CD14-positive monocyte (primary cell): ENCODE measurements at regions of chr7 and their contacts with region 1.

Region 1: GRCh38 chr7:65373608-65374351 is at the start of gene ZNF92:
- DNase-seq: peak; percentile 90 to 96 (median 91)
- H3K4me3 ChIP-seq: peak within 1 kb of the TSS; percentile 75 to 95 (median 77)
- H3K4me3 Mint-ChIP-seq: peak within 1 kb of the TSS; percentile 97 to 98
- H3K27ac ChIP-seq: peak within 1 kb of the TSS; percentile 96 to 97
- H3K27ac Mint-ChIP-seq: peak within 1 kb of the TSS; percentile 94 to 98 (median 97)
- H3K4me1 ChIP-seq: peaks cover 15 to 20% of the 10 kb centered on the region in 2 donors
- H3K4me1 Mint-ChIP-seq: peaks cover 26% of the 10 kb centered on the region
- H3K27me3 ChIP-seq: no peaks in the 10 kb centered on the region
- H3K27me3 Mint-ChIP-seq: peaks cover 0 to 2% (median 2%) of the 10 kb centered on the region in 3 donors
- CTCF ChIP-seq: no peak
- polyA plus RNA-seq, gene ZNF92: 2.3 to 6.4 (median 4.1) TPM

Region 2: GRCh38 chr7:63925623-63926460 is 1447.9 kb before region 1 on chr7:
- intact Hi-C with region 1: loop called in 1 of 2 experiments (anchors 10 kb)
- DNase-seq: peak; percentile 78 to 88 (median 88)
- H3K4me3 ChIP-seq: peak overlapping the region; percentile 53 to 82 (median 82)
- H3K4me3 Mint-ChIP-seq: peak overlapping the region; percentile 92 to 93
- H3K27ac ChIP-seq: peak overlapping the region; percentile 65 to 84
- H3K27ac Mint-ChIP-seq: peak overlapping the region; percentile 84 to 97 (median 91)
- H3K4me1 ChIP-seq: peaks cover 13 to 21% of the 10 kb centered on the region in 2 donors
- H3K4me1 Mint-ChIP-seq: peaks cover 20% of the 10 kb centered on the region
- H3K27me3 ChIP-seq: no peaks in the 10 kb centered on the region
- H3K27me3 Mint-ChIP-seq: peaks cover 0 to 3% (median 2%) of the 10 kb centered on the region in 3 donors
- CTCF ChIP-seq: no peak

Region 3: GRCh38 chr7:64307254-64308015 is 1066.3 kb before region 1 on chr7:
- intact Hi-C with region 1: loop called in 1 of 2 experiments (anchors 10 kb)
- DNase-seq: peak; percentile 88 to 93 (median 92)
- H3K4me3 ChIP-seq: peak overlapping the region; percentile 48 to 83 (median 55)
- H3K4me3 Mint-ChIP-seq: peak overlapping the region; percentile 92 to 96
- H3K27ac ChIP-seq: peak overlapping the region; percentile 48 to 82
- H3K27ac Mint-ChIP-seq: peak overlapping the region; percentile 78 to 93 (median 90)
- H3K4me1 ChIP-seq: peaks cover 19 to 31% of the 10 kb centered on the region in 2 donors
- H3K4me1 Mint-ChIP-seq: peaks cover 39% of the 10 kb centered on the region
- H3K27me3 ChIP-seq: no peaks in the 10 kb centered on the region
- H3K27me3 Mint-ChIP-seq: peaks cover 0 to 3% (median 1%) of the 10 kb centered on the region in 3 donors
- CTCF ChIP-seq: peak; percentile 18

Region 4: DNA sequence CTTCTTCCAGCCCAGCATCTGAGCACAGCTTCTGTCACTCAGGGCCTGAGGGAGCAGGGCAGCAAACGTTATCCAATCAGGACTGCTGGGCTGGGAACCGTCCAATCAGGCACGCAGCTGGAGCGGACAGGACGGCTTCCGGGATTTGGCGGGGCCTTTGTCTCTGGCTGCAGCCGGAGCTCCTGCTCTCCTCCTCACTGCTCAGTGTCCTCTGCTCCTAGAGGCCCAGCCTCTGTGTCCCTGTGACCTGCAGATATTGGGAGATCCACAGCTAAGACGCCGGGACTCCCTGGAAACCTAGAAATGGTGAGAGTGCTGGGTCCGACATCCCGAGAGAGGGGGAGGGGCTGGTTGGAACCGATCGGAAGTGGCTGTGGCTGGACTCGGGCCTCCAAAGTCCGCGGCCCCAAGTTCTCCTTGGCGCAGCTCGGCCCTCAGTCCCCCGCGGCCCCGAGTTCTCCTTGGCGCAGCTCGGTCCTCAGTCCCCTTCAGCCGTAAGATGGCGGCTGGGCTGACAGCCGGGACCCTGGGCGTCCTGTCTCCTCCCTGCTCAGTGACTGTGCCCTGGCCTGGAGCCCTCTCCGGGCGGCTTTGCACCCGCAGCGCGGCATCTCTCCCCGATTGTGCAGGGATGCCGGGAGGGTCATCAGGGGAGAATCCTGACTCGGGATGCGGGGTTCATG is 707.7 kb before region 1 on chr7 and contains the start of gene ZNF107:
- intact Hi-C with region 1: loop called in 1 of 2 experiments (anchors 10 kb)
- DNase-seq: peak; percentile 55 to 75 (median 56)
- H3K4me3 ChIP-seq: peak within 1 kb of the TSS; percentile 76 to 93 (median 90)
- H3K4me3 Mint-ChIP-seq: peak within 1 kb of the TSS; percentile 96 to 98
- H3K27ac ChIP-seq: peak within 1 kb of the TSS; percentile 76 to 77
- H3K27ac Mint-ChIP-seq: peak within 1 kb of the TSS; percentile 86 to 95 (median 91)
- H3K4me1 ChIP-seq: peaks cover 12% of the 10 kb centered on the region in 2 donors
- H3K4me1 Mint-ChIP-seq: peaks cover 17% of the 10 kb centered on the region
- H3K27me3 ChIP-seq: no peaks in the 10 kb centered on the region
- H3K27me3 Mint-ChIP-seq: peaks cover 0 to 1% (median 0%) of the 10 kb centered on the region in 3 donors
- CTCF ChIP-seq: no peak
- polyA plus RNA-seq, gene ZNF107: 0.44 to 0.89 (median 0.65) TPM

Region 5: DNA sequence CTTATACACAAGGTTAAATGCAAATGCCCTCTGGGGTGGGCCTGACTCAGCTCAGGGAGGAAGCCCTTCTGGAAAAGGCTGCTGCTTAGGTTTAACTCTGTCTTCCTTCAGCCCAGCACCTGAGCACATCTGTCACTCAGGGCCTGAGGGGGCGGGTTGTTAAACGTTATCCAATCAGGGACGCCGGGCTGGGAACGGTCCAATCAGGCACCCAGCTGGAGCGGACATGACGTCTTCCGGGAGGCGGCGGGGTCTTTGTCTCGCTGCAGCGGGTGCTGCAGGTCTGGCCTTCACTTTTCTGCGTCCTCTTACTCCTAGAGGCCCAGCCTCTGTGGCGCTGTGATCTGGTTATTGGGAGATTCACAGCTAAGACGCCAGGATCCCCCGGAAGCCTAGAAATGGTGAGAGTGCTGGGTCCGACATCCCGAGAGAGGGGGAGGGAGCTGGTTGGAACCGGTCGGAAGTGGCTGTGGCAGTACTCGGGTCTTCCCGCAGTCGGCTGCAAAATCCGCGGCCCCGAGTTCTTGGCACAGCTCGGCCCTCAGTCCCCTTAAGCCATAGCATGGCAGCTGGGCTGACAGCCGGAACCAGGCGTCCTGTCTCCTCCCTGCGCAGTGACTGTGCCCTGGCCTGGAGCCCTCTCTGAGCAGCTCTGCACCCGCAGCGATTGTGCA is 579.5 kb before region 1 on chr7 and contains the start of gene ZNF138:
- intact Hi-C with region 1: loop called in 1 of 2 experiments (anchors 10 kb)
- DNase-seq: peak; percentile 64 to 79 (median 67)
- H3K4me3 ChIP-seq: peak within 1 kb of the TSS; percentile 70 to 94 (median 91)
- H3K4me3 Mint-ChIP-seq: peak within 1 kb of the TSS; percentile 96 to 99
- H3K27ac ChIP-seq: peak within 1 kb of the TSS; percentile 50 to 82
- H3K27ac Mint-ChIP-seq: peak within 1 kb of the TSS; percentile 80 to 96 (median 92)
- H3K4me1 ChIP-seq: peaks cover 7 to 9% of the 10 kb centered on the region in 2 donors
- H3K4me1 Mint-ChIP-seq: peaks cover 18% of the 10 kb centered on the region
- H3K27me3 ChIP-seq: no peaks in the 10 kb centered on the region
- H3K27me3 Mint-ChIP-seq: peaks cover 0 to 7% (median 4%) of the 10 kb centered on the region in 3 donors
- CTCF ChIP-seq: no peak
- polyA plus RNA-seq, gene ZNF138: 0.89 to 1.1 (median 1.1) TPM

Region 6: GRCh38 chr7:64902806-64903721 is 470.7 kb before region 1 on chr7 and contains the start of gene ZNF273:
- intact Hi-C with region 1: loop called in 1 of 2 experiments (anchors 10 kb)
- DNase-seq: peak; percentile 41 to 72 (median 69)
- H3K4me3 ChIP-seq: peak within 1 kb of the TSS; percentile 61 to 87 (median 85)
- H3K4me3 Mint-ChIP-seq: peak within 1 kb of the TSS; percentile 97 to 99
- H3K27ac ChIP-seq: peak within 1 kb of the TSS; percentile 72 to 80
- H3K27ac Mint-ChIP-seq: peak within 1 kb of the TSS; percentile 90 to 96 (median 93)
- H3K4me1 ChIP-seq: peaks cover 9 to 13% of the 10 kb centered on the region in 2 donors
- H3K4me1 Mint-ChIP-seq: peaks cover 35% of the 10 kb centered on the region
- H3K27me3 ChIP-seq: no peaks in the 10 kb centered on the region
- H3K27me3 Mint-ChIP-seq: peaks cover 1 to 3% (median 1%) of the 10 kb centered on the region in 3 donors
- CTCF ChIP-seq: no peak
- polyA plus RNA-seq, gene ZNF273: 0.21 to 1.7 (median 0.62) TPM

Region 7: GRCh38 chr7:65317372-65317771 is 56.4 kb before region 1 on chr7:
- intact Hi-C with region 1: no loop called
- DNase-seq: no peak
- H3K4me3 ChIP-seq: no peak overlapping the region
- H3K4me3 Mint-ChIP-seq: no peak overlapping the region
- H3K27ac ChIP-seq: no peak overlapping the region
- H3K27ac Mint-ChIP-seq: no peak overlapping the region
- H3K4me1 ChIP-seq: no peaks in the 10 kb centered on the region
- H3K4me1 Mint-ChIP-seq: peaks cover 3% of the 10 kb centered on the region
- H3K27me3 ChIP-seq: no peaks in the 10 kb centered on the region
- H3K27me3 Mint-ChIP-seq: peaks cover 2 to 4% (median 4%) of the 10 kb centered on the region in 3 donors
- CTCF ChIP-seq: no peak

Region 8: GRCh38 chr7:65429642-65430343 is 56.0 kb after region 1 on chr7:
- intact Hi-C with region 1: no loop called
- DNase-seq: no peak
- H3K4me3 ChIP-seq: peak overlapping the region in 1 of 3 experiments; percentile 22
- H3K4me3 Mint-ChIP-seq: no peak overlapping the region
- H3K27ac ChIP-seq: no peak overlapping the region
- H3K27ac Mint-ChIP-seq: no peak overlapping the region
- H3K4me1 ChIP-seq: no peaks in the 10 kb centered on the region
- H3K4me1 Mint-ChIP-seq: no peaks in the 10 kb centered on the region
- H3K27me3 ChIP-seq: no peaks in the 10 kb centered on the region
- H3K27me3 Mint-ChIP-seq: peaks cover 0 to 3% (median 0%) of the 10 kb centered on the region in 3 donors
- CTCF ChIP-seq: no peak